Mammary epithelial cell (primary cell): ENCODE measurements at regions of chr6 and their contacts with region 1.

Region 1: DNA sequence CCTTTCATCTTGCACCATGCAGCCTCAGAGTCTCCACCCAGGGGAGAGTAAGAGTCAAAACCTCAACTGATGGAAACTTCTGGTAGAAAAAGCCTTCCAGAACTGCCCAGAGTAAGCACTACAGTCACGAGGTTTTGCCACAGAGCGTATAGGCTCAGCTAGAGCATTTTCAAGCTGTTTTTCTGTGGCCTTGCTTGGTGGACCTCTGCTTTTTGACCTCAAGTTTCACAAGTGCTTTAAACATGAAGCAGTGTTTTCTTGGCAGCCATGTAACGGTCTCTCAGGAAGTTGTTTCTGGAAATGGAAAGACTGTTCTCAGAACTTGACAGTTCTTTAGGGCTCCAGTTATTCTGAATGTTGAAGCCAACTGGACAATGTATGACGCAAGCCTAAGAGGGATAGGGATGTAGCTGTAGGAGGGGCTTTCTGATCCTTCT is 146.5 kb downstream of the ZDHHC14 start:
- DNase-seq: no peak
- H3K4me3 ChIP-seq: no peak overlapping the region
- H3K27ac ChIP-seq: no peak overlapping the region
- H3K4me1 ChIP-seq: no peaks in the 10 kb centered on the region
- H3K27me3 ChIP-seq: no peaks in the 10 kb centered on the region
- CTCF ChIP-seq: no peak

Region 2: GRCh38 chr6:157479464-157480303 is 47.8 kb before region 1 on chr6:
- CTCF ChIA-PET with region 1: no interaction called
- dilution Hi-C with region 1: loop called (anchors 5 kb)
- in situ Hi-C with region 1: no loop called
- intact Hi-C with region 1: no loop called
- DNase-seq: no peak
- H3K4me3 ChIP-seq: no peak overlapping the region
- H3K27ac ChIP-seq: no peak overlapping the region
- H3K4me1 ChIP-seq: no peaks in the 10 kb centered on the region
- H3K27me3 ChIP-seq: no peaks in the 10 kb centered on the region
- CTCF ChIP-seq: no peak